Calu3 (cell line): ENCODE measurements at regions of chr20 and their contacts with region 1.

Region 1: DNA sequence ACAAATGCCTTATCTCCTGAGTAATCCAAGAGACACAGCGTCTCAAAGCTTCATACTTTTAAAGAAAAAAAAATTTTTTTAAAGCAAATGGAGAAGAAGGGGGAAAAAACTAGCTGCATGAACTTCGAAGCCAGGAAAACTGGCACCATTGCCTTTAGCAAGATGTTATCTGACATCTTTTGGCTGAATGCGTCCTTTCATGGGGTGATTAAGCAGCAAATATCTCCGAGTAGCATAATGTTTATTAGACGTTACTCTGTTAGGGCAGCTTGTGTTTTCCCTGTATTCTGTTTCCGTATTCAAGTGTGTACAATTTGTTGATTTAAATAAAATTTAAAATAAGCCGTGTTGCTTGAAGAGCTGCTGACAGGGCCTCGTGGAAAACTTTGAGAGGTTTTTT is 76.5 kb upstream of the TSHZ2 start:
- DNase-seq: no peak
- H3K4me3 Mint-ChIP-seq: no peak overlapping the region
- H3K27ac Mint-ChIP-seq: no peak overlapping the region
- H3K4me1 Mint-ChIP-seq: no peaks in the 10 kb centered on the region
- H3K27me3 Mint-ChIP-seq: peaks cover 40% of the 10 kb centered on the region
- CTCF ChIP-seq: no peak

Region 2: DNA sequence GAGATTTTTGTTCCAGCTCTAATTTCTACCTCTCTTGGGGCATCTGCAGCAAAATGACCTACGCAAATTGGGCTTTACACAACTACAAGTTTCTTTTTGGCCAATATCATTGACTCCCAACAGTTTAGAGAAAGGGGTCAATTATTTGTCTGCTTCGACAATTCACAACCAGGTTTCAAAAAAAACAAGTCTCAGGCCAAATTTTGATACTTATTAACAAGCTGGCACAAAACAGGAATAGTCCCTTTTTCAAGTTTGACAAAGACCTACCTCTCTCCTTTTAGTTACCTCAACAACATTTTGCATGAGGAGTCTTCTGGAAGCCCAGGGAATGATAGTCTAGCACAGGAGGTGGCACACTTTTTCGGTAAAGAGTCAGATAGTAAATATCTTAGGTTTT is 21.5 kb before region 1 on chr20:
- CTCF ChIA-PET with region 1: no interaction called
- intact Hi-C with region 1: loop called (anchors 2 kb)
- DNase-seq: no peak
- H3K4me3 Mint-ChIP-seq: no peak overlapping the region
- H3K27ac Mint-ChIP-seq: no peak overlapping the region
- H3K4me1 Mint-ChIP-seq: no peaks in the 10 kb centered on the region
- H3K27me3 Mint-ChIP-seq: peaks cover 13% of the 10 kb centered on the region
- CTCF ChIP-seq: no peak

Region 3: DNA sequence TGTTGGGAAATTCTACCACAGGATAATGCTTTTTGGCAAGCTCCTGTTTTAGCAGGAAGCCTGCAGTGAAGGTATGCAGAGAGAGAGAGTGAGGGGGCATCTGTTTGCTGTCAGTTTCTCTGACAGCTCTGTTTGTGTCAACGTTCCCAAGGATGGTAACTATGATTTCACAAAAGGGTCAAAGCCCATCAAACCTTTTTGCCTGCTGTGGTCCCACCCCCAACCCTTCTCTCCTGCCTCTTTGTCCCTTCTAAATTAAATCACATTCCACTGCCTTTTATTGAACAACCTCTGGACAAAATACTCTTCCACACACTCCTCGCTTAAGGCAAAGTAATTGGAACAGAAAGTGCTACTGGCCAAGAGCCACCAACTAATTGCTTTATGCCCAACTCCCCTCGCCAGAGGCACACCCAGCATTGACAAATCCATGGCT is 204.8 kb after region 1 on chr20:
- CTCF ChIA-PET with region 1: no interaction called
- intact Hi-C with region 1: no loop called
- DNase-seq: no peak
- H3K4me3 Mint-ChIP-seq: no peak overlapping the region
- H3K27ac Mint-ChIP-seq: no peak overlapping the region
- H3K4me1 Mint-ChIP-seq: no peaks in the 10 kb centered on the region
- H3K27me3 Mint-ChIP-seq: peaks cover 26% of the 10 kb centered on the region
- CTCF ChIP-seq: no peak

Region 4: DNA sequence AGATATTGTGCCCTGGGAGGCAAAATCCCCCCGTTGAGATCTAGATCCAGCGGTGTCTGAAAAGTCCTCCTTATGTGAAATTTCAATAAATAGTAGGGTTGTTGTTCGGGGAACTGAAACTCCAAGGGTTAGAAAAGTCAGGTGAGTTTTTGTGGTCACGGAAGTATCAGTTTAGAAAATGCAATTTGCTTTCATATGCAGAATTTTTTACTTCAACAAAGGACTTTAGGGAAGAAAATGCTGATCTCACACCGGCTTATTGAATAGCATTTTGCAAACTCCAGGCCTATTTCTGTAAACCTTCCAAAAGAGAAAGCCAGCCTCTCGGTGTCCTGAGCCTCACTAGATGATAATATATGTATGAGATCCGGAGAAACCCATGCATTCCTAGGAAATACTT is 331.1 kb after region 1 on chr20:
- CTCF ChIA-PET with region 1: no interaction called
- intact Hi-C with region 1: no loop called
- DNase-seq: no peak
- H3K4me3 Mint-ChIP-seq: no peak overlapping the region
- H3K27ac Mint-ChIP-seq: no peak overlapping the region
- H3K4me1 Mint-ChIP-seq: peaks cover 12% of the 10 kb centered on the region
- H3K27me3 Mint-ChIP-seq: peaks cover 29% of the 10 kb centered on the region
- CTCF ChIP-seq: no peak